Naive thymus-derived CD8-positive, alpha-beta T cell (primary cell): ENCODE measurements at regions of chr12 and their contacts with region 1.

Region 1: GRCh38 chr12:122021822-122022526 is at the start of gene BCL7A:
- DNase-seq: peak; percentile 39 to 84 (median 56)
- ATAC-seq: peak; percentile 73 to 78
- H3K4me3 Mint-ChIP-seq: peak within 1 kb of the TSS; percentile 84 to 95 (median 91)
- H3K27ac Mint-ChIP-seq: peak within 1 kb of the TSS; percentile 67 to 96 (median 87)
- H3K4me1 Mint-ChIP-seq: peaks cover 9 to 34% (median 19%) of the 10 kb centered on the region in 4 donors
- H3K27me3 Mint-ChIP-seq: peaks cover 0 to 10% (median 0%) of the 10 kb centered on the region in 5 donors
- polyA plus RNA-seq, gene BCL7A: 3.0 to 7.3 (median 7.1) TPM

Region 2: DNA sequence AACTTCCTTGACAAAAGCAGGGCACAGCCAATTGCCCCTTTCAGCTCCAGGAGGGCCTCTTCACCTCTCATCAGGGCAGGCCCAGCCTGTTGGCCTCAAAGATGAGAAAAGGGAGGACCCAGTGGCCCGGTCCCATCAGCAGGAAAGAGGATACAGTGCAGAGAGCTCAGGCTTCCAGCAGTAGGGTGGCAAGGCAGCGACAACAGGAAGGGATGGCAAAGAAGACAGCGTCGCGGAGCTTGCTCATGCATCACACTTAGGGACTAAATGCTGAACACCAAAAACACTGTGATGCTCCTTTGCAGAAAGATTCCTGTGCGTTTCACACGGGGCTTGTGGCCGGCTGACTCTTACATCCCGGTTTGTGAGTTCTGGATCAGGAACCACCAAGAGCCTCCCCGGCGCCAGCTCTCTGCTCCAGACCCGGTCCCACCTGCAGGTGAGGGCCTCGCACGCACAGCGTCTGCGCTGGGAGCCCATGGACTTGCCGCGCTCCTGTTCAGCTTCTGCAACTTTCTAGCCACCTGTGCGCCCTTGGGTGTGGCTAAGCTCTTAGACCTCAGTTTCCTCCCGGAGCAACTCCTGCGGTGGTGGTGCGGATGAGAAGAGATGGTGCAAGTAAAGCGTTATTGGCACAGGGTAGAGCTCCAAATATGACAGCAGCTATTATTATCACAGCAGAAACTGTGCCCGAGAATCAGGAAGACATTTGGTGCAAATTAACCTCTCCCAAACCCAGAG is 15.6 kb before region 1 on chr12:
- POLR2A ChIA-PET with region 1: interaction called, 13 read pairs
- DNase-seq: peak in 3 of 10 donors; percentile 19 to 29 (median 25)
- ATAC-seq: peak; percentile 67 to 72
- H3K4me3 Mint-ChIP-seq: peak overlapping the region; percentile 70 to 89 (median 78)
- H3K27ac Mint-ChIP-seq: peak overlapping the region; percentile 61 to 93 (median 77)
- H3K4me1 Mint-ChIP-seq: peaks cover 12 to 67% (median 33%) of the 10 kb centered on the region in 4 donors
- H3K27me3 Mint-ChIP-seq: peaks cover 0 to 3% (median 2%) of the 10 kb centered on the region in 5 donors